ENCODE measurements at regions of chr4 and their contacts with region 1.

Region 1: GRCh38 chr4:95155759-95156451 is 392.9 kb downstream of the UNC5C start:
- DNase-seq: no peak
- H3K4me3 Mint-ChIP-seq: peak overlapping the region; percentile 54
- H3K27ac Mint-ChIP-seq: peak overlapping the region; percentile 78
- H3K4me1 Mint-ChIP-seq: peaks cover 22% of the 10 kb centered on the region
- H3K27me3 Mint-ChIP-seq: no peaks in the 10 kb centered on the region

Region 2: DNA sequence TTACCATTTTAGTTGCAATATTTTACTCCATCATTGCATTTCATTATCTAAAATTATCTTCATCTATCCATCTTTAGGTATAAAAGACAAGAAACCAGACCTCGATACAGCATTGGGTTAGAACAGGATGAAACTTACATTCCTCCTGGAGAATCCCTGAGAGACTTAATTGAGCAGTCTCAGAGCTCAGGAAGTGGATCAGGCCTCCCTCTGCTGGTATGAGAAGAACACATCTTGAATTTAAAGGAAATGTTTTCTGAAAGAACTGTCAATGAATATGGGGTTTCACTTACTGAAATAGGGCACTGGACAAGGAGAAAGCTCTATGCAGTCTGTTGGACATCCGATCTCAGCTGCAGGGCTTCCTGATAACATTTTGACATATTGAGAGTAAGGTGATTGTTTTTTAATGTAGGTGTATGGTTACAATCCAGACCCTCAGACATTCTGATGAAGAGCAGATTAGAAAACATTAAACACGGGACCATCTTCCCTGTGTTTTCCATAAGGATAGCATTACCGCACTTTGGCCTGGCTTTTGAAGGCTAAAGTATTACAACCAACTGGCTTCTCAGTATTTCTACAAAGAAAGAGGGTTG is 30.9 kb before region 1 on chr4:
- intact Hi-C with region 1: no loop called
- DNase-seq: no peak
- H3K4me3 Mint-ChIP-seq: no peak overlapping the region
- H3K27ac Mint-ChIP-seq: no peak overlapping the region
- H3K4me1 Mint-ChIP-seq: peaks cover under 1% of the 10 kb centered on the region
- H3K27me3 Mint-ChIP-seq: peaks cover 11% of the 10 kb centered on the region

Region 3: GRCh38 chr4:95283320-95283719 is 127.4 kb after region 1 on chr4:
- intact Hi-C with region 1: no loop called
- DNase-seq: no peak
- H3K4me3 Mint-ChIP-seq: no peak overlapping the region
- H3K27ac Mint-ChIP-seq: no peak overlapping the region
- H3K4me1 Mint-ChIP-seq: no peaks in the 10 kb centered on the region
- H3K27me3 Mint-ChIP-seq: no peaks in the 10 kb centered on the region

Region 4: DNA sequence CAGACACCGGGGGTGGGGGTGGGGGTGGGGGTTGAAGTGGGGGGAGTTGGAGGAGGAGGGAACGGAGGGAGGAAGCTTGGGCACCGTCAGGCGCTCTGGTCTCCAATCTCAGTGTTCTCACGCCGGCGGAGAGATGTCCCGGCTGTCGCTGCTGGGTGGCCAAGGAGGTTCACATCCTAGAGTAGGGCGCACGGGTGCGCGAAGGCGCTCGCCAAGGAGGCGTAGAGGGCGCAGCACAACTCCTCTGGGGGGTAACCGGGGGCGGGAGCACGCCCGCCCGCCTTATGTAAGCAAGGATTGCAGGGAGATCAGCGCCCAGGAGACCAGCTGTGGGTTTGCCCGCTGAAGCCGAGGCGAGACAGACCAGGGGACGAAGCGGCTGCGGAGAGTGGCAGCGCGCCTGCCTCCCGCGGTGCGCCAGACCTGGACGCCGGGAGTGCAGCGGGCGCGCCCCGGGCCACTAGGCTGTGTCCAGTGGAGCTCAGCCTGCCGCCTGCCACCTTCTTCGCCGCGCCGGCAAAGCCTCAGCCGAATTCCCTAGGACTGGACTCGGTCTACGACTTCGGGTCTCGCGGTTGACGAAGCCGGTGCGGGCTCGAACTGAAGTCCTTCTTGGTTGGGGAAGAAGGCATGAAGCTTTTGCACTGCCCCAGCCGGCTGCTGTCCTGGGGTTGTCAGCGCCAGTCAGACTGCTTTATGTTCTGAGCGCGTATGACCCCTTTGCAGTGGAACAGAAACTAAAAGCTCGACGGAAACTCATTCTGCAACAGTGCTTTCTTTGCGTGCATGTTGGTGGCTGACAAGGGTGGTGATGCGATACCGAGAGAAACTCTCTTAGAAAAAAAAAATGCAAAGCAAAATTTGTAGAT is 393.6 kb after region 1 on chr4:
- intact Hi-C with region 1: loop called (anchors 2 kb)
- DNase-seq: peak; percentile 45
- H3K4me3 Mint-ChIP-seq: peak overlapping the region; percentile 89
- H3K27ac Mint-ChIP-seq: no peak overlapping the region
- H3K4me1 Mint-ChIP-seq: peaks cover 26% of the 10 kb centered on the region
- H3K27me3 Mint-ChIP-seq: peaks cover 59% of the 10 kb centered on the region

Region 5: DNA sequence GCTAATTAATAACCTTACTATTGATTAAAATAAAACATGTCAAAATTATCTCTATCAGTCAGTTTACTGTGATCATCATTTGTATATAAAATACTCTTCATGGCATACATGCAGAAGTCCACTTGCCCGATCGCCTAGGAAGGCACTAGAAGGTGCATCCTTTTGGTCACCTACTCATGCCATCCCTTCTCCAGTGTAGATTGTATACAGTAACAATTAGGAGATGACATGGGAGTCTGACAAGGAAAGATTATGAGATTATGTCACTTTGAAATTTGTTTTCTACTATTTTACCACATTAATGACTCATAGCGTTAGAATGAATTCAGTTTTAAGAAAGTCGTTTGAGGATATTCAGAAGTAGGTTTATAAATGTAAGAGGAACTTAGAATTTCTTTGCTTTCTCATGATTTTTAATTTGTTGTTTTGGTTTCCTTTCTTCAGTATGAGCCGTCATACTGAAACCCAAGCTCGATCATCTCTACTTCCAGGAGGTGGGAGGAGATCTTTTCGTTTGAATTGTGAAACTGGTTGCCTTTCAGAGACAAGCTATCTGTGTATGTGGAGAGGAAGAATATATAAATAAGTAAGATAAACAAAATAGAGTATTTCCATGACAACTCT is 444.0 kb after region 1 on chr4:
- intact Hi-C with region 1: loop called (anchors 10 kb)
- DNase-seq: no peak
- H3K4me3 Mint-ChIP-seq: peak overlapping the region; percentile 9
- H3K27ac Mint-ChIP-seq: no peak overlapping the region
- H3K4me1 Mint-ChIP-seq: peaks cover 17% of the 10 kb centered on the region
- H3K27me3 Mint-ChIP-seq: peaks cover 23% of the 10 kb centered on the region

Region 6: GRCh38 chr4:96352051-96352517 is 1196.2 kb after region 1 on chr4:
- intact Hi-C with region 1: loop called (anchors 2 kb)
- DNase-seq: no peak
- H3K4me3 Mint-ChIP-seq: no peak overlapping the region
- H3K27ac Mint-ChIP-seq: no peak overlapping the region
- H3K4me1 Mint-ChIP-seq: peaks cover 2% of the 10 kb centered on the region
- H3K27me3 Mint-ChIP-seq: no peaks in the 10 kb centered on the region

Measured in activated T-helper 2 cell treated with anti-CD3 and anti-CD28 coated beads, Interferon-gamma antibody, Interleukin-2, Interleukin-4, amounts not matched to agents 10 μg/mL and 5 μg/mL and 100 μg/mL, durations not matched to agents 14 hours and 24 hours and 36 hours (primary cell).